IMR-90 (cell line): ENCODE measurements at regions of chr17 and their contacts with region 1.

Region 1: DNA sequence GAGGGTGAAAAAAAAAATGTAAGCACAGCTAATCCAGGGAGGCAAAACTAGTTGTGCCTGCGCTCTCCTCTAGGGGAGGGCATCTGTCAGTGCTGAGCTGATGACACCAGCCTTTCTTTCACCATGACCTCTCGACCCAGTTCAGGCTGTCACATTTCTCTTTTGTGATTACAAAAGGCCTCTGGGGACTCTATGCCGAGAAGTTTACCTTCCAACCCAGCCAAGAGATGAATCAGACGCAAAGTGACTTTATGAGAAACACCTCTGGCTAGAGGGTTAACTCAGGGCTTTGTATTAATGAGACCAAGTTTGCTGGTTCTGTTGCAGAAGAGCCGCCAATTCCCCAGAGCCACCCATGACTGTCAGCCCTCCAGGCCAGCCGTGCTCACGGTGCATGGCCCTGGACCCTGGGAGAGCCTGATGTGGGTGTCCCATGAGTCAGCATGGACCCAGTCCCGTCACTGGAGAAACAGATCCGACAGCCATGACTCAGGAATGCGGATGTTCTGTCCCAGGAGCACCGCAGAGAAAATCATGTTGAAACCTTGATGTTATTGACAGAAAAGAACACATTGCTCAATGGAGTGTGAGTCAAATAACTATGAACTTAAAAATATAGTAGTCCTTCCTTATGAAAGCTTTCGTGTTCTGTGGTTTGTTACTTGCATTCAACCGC is 437.2 kb downstream of the HS3ST3B1 start:
- DNase-seq: peak; percentile 99
- ATAC-seq: peak; percentile 98
- H3K4me3 ChIP-seq: no peak overlapping the region
- H3K27ac ChIP-seq: peak overlapping the region; percentile 16
- H3K4me1 ChIP-seq: peaks cover 6% of the 10 kb centered on the region
- H3K27me3 ChIP-seq: no peaks in the 10 kb centered on the region
- CTCF ChIP-seq: 0 out of 2 replicates have a peak, but pooled peaks have one; percentile 18
- POLR2A ChIP-seq: no peak
- RAD21 ChIP-seq: no peak

Region 2: GRCh38 chr17:14594690-14595089 is 143.4 kb before region 1 on chr17:
- CTCF ChIA-PET with region 1: no interaction called
- POLR2A ChIA-PET with region 1: no interaction called
- dilution Hi-C with region 1: no loop called
- in situ Hi-C with region 1: no loop called
- intact Hi-C with region 1: no loop called
- DNase-seq: no peak
- ATAC-seq: no peak
- H3K4me3 ChIP-seq: no peak overlapping the region
- H3K27ac ChIP-seq: no peak overlapping the region
- H3K4me1 ChIP-seq: no peaks in the 10 kb centered on the region
- H3K27me3 ChIP-seq: peaks cover 20% of the 10 kb centered on the region
- CTCF ChIP-seq: no peak
- POLR2A ChIP-seq: no peak
- RAD21 ChIP-seq: no peak

Region 3: DNA sequence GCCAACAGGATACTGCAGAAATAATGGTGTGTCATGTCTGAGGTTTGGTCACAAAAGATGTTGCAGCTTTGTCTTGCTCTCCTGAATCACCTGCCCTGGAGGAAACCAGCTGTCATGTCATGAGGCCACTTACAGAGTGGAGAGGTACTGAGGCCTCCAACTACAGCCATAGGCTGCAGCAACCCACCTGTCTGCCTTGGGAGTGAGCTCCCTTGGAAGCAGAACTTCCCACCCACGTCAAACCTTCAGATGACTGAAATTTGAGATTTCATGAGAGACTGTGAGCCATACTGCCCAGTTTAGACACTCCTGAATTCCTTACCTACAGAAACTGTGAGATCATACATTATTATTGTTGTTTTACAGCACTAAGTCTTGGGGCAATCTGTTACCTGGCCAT is 38.7 kb after region 1 on chr17:
- CTCF ChIA-PET with region 1: no interaction called
- POLR2A ChIA-PET with region 1: no interaction called
- dilution Hi-C with region 1: no loop called
- in situ Hi-C with region 1: no loop called
- intact Hi-C with region 1: no loop called
- DNase-seq: peak; percentile 50
- ATAC-seq: no peak
- H3K4me3 ChIP-seq: no peak overlapping the region
- H3K27ac ChIP-seq: no peak overlapping the region
- H3K4me1 ChIP-seq: peaks cover 9% of the 10 kb centered on the region
- H3K27me3 ChIP-seq: no peaks in the 10 kb centered on the region
- CTCF ChIP-seq: no peak
- POLR2A ChIP-seq: no peak
- RAD21 ChIP-seq: no peak

Region 4: GRCh38 chr17:14845591-14846281 is 107.6 kb after region 1 on chr17:
- CTCF ChIA-PET with region 1: no interaction called
- POLR2A ChIA-PET with region 1: no interaction called
- dilution Hi-C with region 1: no loop called
- in situ Hi-C with region 1: loop called (anchors 10 kb)
- intact Hi-C with region 1: no loop called
- DNase-seq: peak; percentile 18
- ATAC-seq: peak; percentile 69
- H3K4me3 ChIP-seq: no peak overlapping the region
- H3K27ac ChIP-seq: no peak overlapping the region
- H3K4me1 ChIP-seq: peaks cover 5% of the 10 kb centered on the region
- H3K27me3 ChIP-seq: no peaks in the 10 kb centered on the region
- CTCF ChIP-seq: no peak
- POLR2A ChIP-seq: no peak
- RAD21 ChIP-seq: no peak

Region 5: DNA sequence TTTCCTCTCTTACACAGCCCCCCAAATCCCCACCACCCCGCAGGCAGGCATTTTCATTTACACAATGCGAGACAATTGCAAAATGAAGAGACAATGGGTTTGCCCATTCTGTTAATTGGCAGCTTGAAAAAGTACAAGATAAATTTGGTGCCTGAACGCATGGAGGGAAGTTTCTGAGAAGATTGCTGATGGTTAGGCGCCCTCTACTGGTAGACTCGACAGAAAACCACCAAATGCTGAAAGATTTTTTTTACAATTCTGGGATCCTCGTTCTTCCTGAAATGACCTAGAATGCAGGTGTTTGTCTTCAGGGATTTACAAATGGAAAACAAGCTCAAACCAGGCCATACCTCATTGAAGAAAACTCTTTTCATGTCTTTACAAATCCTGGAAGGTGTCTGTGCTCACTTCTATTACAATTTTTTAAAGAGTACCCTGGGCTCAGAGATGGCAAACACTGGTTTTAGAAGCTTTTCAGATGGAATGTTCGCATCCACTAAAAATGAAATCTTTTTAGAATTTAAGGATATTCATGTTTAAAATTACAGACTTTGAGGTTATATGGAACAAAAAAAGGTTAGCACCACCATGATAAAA is 188.5 kb after region 1 on chr17:
- CTCF ChIA-PET with region 1: no interaction called
- POLR2A ChIA-PET with region 1: no interaction called
- dilution Hi-C with region 1: no loop called
- in situ Hi-C with region 1: no loop called
- intact Hi-C with region 1: no loop called
- DNase-seq: peak; percentile 74
- ATAC-seq: peak; percentile 49; the same call in 1 of the 2 replicates
- H3K4me3 ChIP-seq: no peak overlapping the region
- H3K27ac ChIP-seq: no peak overlapping the region
- H3K4me1 ChIP-seq: no peaks in the 10 kb centered on the region
- H3K27me3 ChIP-seq: peaks cover 4% of the 10 kb centered on the region
- CTCF ChIP-seq: peak; percentile 89
- POLR2A ChIP-seq: 0 out of 2 replicates have a peak, but pooled peaks have one; percentile 31
- RAD21 ChIP-seq: peak; percentile 99

Region 6: GRCh38 chr17:15944759-15945529 is 1206.8 kb after region 1 on chr17 and contains the start of gene ADORA2B:
- CTCF ChIA-PET with region 1: no interaction called
- POLR2A ChIA-PET with region 1: no interaction called
- dilution Hi-C with region 1: no loop called
- in situ Hi-C with region 1: no loop called
- intact Hi-C with region 1: no loop called
- DNase-seq: peak; percentile 71
- ATAC-seq: peak; percentile 83
- H3K4me3 ChIP-seq: peak within 1 kb of the TSS; percentile 73
- H3K27ac ChIP-seq: peak within 1 kb of the TSS; percentile 81
- H3K4me1 ChIP-seq: peaks cover 20% of the 10 kb centered on the region
- H3K27me3 ChIP-seq: no peaks in the 10 kb centered on the region
- CTCF ChIP-seq: peak; percentile 70
- POLR2A ChIP-seq: peak; percentile 41; the same call in 1 of the 2 replicates
- RAD21 ChIP-seq: peak; percentile 57
- total RNA-seq, gene ADORA2B: 5.2 and 5.8 TPM in 2 replicates